ENCODE measurements at regions of chr3 and their contacts with region 1.

Region 1: DNA sequence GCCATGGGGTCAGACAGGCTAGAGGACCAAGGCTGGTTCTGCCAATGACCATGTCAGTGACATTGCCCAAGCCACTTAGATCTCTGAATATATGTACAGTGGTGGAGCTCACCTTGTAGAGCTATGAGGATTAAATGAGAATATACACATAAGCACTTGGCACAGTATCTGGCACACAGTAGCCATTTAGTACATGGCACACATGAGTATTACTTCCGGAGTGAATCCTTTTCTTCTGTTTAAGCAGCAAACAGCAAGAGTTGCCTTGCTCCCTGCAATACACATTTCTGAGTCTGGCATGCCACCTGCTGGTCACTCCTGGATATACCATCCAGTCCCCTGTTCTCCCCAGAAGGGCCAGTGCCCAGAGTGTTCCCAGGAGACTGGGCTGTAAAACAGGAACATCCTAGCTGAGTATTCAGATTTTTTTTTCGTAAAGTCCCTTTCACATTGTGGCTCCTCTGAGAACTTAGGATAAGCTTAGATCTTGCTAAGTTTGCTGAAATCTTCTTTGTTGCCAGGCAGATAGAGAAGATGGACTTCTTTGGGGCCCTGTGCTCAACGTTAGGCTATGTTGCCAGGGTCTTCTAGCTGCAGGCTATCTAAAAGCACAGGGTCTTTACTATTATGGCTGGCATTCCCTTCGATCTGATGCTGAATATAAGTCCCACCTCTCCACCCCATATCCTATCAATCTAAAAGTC is 203.4 kb downstream of the ADAMTS9 start:
- DNase-seq: peak; percentile 76
- ATAC-seq: peak; percentile 93 to 95

Region 2: DNA sequence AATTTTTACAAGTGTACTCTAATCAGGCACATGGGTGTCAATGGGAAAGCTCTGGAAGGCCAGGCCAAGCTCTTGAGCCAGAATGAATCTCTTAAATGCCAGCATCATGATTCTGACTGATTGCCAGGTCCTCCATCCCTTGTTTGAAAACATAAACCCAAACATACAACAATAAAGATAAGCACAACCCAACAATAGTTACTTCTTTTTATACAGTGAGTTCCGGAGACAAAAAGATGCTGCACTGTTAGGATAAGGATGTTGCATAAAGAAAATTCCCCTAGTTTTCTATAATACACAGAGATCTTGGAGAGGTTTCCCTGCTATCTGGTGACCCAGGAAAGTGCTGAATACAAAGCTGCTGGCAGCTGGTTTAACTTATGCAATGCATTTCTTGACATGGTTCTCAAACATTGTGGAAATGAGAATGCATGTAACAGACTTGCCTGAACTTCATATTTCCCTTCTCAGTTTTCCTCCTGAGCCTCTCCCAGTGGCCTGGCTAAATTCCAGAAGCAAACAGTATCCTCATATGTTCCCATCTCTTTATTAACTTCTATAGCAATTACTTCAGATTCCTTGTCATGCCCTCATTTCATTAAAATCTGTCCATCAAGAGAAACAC is 79.1 kb before region 1 on chr3:
- intact Hi-C with region 1: loop called in 1 of 2 experiments (anchors 10 kb)
- DNase-seq: no peak
- ATAC-seq: no peak